GM12878 (cell line): ENCODE measurements at regions of chr2 and their contacts with region 1.

Region 1: GRCh38 chr2:176554101-176555048 is 285.1 kb downstream of the MTX2 start:
- DNase-seq: peak; percentile 8
- ATAC-seq: peak; percentile 79
- H3K4me3 ChIP-seq: peak overlapping the region; percentile 32; the same call in 1 of the 2 replicates
- H3K27ac ChIP-seq: no peak overlapping the region
- H3K4me1 ChIP-seq: no peaks in the 10 kb centered on the region
- H3K27me3 ChIP-seq: 0 out of 4 replicates have a peak, but pooled peaks cover 0 to 3% of the 10 kb centered on the region in 2 experiments
- CTCF ChIP-seq: peak; percentile 58 to 78 (median 70)
- EP300 ChIP-seq: no peak
- POLR2A ChIP-seq: no peak
- RAD21 ChIP-seq: peak; percentile 82

Region 2: DNA sequence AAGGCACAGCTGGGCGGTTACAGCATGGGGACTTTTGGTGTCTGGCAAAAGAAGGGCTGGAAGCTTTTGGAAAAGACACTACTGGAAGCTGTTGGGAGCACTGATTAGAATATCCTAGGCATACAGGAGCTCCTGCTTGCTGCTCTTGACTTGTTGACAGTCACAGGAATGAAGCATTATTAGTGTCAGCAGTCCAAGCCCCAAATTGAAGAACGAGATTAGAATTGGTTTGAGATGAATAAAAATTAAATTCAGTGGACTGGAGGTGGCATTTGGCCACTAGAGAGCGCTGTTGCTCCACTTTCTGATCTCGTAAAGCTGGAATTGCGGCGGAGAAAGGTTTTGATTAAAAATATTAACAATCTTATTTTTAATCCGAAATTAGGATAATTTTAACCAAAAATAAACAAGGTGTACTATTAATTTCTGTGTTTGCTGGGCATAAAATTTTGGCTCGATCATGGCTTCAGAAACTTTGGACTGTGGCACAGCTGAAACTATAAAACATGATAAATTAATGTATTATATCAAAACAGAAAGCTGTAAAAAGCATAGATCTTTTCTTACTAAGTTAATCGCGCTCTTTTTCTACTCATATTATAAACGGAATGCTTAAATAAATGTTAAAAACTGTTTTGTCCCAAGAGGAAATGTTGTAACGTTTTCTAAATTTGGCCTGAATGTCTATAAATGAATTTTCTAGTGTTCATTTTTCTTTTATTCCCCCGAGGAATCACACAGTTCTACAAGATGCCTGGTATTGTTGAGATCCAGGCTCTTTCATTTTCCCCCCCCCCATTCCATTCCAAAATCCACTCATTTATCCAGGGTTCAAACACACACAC is 427.2 kb before region 1 on chr2:
- CTCF ChIA-PET with region 1: interaction called, 36 read pairs
- POLR2A ChIA-PET with region 1: no interaction called
- RAD21 ChIA-PET with region 1: interaction called, 16 read pairs
- SMC1A ChIA-PET with region 1: interaction called, 20 read pairs
- in situ Hi-C with region 1: no loop called
- intact Hi-C with region 1: no loop called
- DNase-seq: no peak
- ATAC-seq: peak; percentile 49; the same call in 2 of the 3 replicates
- H3K4me3 ChIP-seq: no peak overlapping the region
- H3K27ac ChIP-seq: no peak overlapping the region
- H3K4me1 ChIP-seq: no peaks in the 10 kb centered on the region
- H3K27me3 ChIP-seq: peaks cover 7 to 29% of the 10 kb centered on the region in 2 experiments
- CTCF ChIP-seq: peak; percentile 61 to 77 (median 66)
- EP300 ChIP-seq: no peak
- POLR2A ChIP-seq: no peak
- RAD21 ChIP-seq: peak; percentile 81

Region 3: GRCh38 chr2:176140513-176141317 is 413.7 kb before region 1 on chr2:
- CTCF ChIA-PET with region 1: interaction called, 120 read pairs
- POLR2A ChIA-PET with region 1: no interaction called
- RAD21 ChIA-PET with region 1: interaction called, 103 read pairs
- SMC1A ChIA-PET with region 1: interaction called, 58 read pairs
- in situ Hi-C with region 1: loop called (anchors 5 kb)
- intact Hi-C with region 1: loop called (anchors 1 kb)
- DNase-seq: peak; percentile 24
- ATAC-seq: peak; percentile 99
- H3K4me3 ChIP-seq: peak overlapping the region; percentile 37; the same call in 1 of the 2 replicates
- H3K27ac ChIP-seq: no peak overlapping the region
- H3K4me1 ChIP-seq: no peaks in the 10 kb centered on the region
- H3K27me3 ChIP-seq: peaks cover 0 to 11% of the 10 kb centered on the region in 2 experiments
- CTCF ChIP-seq: peak; percentile 75 to 93 (median 92)
- EP300 ChIP-seq: no peak
- POLR2A ChIP-seq: no peak; the same call in 1 of the 2 replicates
- RAD21 ChIP-seq: peak; percentile 95

Region 4: DNA sequence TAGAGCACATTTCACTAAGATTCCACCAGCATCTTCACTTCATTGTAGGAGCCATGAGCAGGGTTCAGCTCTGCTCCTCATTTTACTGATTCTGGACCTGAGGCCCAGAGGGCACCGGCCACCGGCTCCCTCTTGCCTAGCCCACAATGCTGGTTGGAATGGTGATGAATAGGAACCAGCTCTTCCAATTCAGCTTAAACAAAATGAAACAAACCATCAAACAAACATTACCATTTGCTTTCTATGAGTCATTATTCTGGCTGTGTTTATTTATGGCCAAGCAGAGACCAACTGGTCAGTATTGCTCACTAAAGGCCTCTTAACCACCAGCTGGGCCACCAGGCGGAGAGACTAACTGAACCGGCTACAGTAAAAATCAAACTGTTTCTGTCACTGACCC is 108.4 kb before region 1 on chr2:
- CTCF ChIA-PET with region 1: interaction called, 10 read pairs
- POLR2A ChIA-PET with region 1: no interaction called
- RAD21 ChIA-PET with region 1: interaction called, 15 read pairs
- SMC1A ChIA-PET with region 1: interaction called, 13 read pairs
- in situ Hi-C with region 1: no loop called
- intact Hi-C with region 1: no loop called
- DNase-seq: no peak
- ATAC-seq: no peak
- H3K4me3 ChIP-seq: no peak overlapping the region
- H3K27ac ChIP-seq: no peak overlapping the region
- H3K4me1 ChIP-seq: no peaks in the 10 kb centered on the region
- H3K27me3 ChIP-seq: no peaks in the 10 kb centered on the region
- CTCF ChIP-seq: no peak
- EP300 ChIP-seq: no peak
- POLR2A ChIP-seq: no peak
- RAD21 ChIP-seq: no peak

Region 5: GRCh38 chr2:176531608-176532007 is 22.8 kb before region 1 on chr2:
- CTCF ChIA-PET with region 1: interaction called, 16 read pairs
- POLR2A ChIA-PET with region 1: no interaction called
- RAD21 ChIA-PET with region 1: interaction called, 8 read pairs
- SMC1A ChIA-PET with region 1: no interaction called
- in situ Hi-C with region 1: no loop called
- intact Hi-C with region 1: no loop called
- DNase-seq: no peak
- ATAC-seq: no peak
- H3K4me3 ChIP-seq: no peak overlapping the region
- H3K27ac ChIP-seq: no peak overlapping the region
- H3K4me1 ChIP-seq: no peaks in the 10 kb centered on the region
- H3K27me3 ChIP-seq: peaks cover 0 to 4% of the 10 kb centered on the region in 2 experiments; a peak in 2 of 4 replicates
- CTCF ChIP-seq: no peak
- EP300 ChIP-seq: no peak
- POLR2A ChIP-seq: no peak
- RAD21 ChIP-seq: no peak

Region 6: DNA sequence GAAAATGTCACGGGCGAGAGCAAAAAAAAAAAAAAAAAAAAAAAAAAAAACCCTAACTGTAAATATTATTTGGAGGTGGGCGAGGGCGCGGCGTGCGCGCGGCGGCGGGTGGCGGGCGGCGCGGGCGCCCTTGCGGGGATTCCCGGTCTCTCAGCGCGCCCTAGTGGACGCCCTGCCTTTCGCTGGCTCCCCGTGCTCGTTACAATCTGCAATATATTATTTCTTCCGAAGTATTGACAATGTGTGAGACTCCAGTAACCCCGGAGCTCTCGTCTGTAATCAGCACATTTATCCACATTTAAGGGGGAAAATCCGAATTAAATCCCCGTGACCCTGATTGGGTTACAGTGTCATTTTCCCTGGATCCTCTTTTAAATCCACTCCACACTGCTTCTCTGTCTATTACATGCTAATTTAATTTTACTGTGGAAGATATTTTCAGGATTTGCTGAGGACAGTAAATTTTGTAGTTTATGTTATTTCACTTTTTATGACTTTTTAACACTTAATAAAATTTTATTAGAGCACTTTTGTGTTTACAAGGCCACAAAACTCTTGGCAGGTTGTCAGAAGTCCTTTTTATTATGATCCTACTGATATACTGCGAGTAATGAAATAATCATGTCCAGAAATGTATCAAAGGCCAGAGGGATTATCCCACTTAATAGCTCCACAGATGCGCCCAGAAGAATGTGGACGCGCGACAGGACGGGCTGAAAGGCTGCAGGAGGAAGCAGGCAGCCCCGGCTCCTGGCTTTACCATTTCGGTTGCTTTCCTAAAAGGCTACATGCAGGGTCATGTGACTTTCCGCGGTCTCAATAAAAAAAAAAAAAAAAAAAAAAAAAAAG is 84.0 kb after region 1 on chr2:
- CTCF ChIA-PET with region 1: interaction called, 19 read pairs
- POLR2A ChIA-PET with region 1: no interaction called
- RAD21 ChIA-PET with region 1: interaction called, 12 read pairs
- SMC1A ChIA-PET with region 1: interaction called, 10 read pairs
- in situ Hi-C with region 1: no loop called
- intact Hi-C with region 1: no loop called
- DNase-seq: no peak
- ATAC-seq: peak; percentile 93
- H3K4me3 ChIP-seq: peak overlapping the region; percentile 64
- H3K27ac ChIP-seq: no peak overlapping the region
- H3K4me1 ChIP-seq: no peaks in the 10 kb centered on the region
- H3K27me3 ChIP-seq: peaks cover 2 to 8% of the 10 kb centered on the region in 2 experiments
- CTCF ChIP-seq: peak; percentile 68 to 74 (median 70)
- EP300 ChIP-seq: no peak
- POLR2A ChIP-seq: no peak
- RAD21 ChIP-seq: peak; percentile 73

Region 7: DNA sequence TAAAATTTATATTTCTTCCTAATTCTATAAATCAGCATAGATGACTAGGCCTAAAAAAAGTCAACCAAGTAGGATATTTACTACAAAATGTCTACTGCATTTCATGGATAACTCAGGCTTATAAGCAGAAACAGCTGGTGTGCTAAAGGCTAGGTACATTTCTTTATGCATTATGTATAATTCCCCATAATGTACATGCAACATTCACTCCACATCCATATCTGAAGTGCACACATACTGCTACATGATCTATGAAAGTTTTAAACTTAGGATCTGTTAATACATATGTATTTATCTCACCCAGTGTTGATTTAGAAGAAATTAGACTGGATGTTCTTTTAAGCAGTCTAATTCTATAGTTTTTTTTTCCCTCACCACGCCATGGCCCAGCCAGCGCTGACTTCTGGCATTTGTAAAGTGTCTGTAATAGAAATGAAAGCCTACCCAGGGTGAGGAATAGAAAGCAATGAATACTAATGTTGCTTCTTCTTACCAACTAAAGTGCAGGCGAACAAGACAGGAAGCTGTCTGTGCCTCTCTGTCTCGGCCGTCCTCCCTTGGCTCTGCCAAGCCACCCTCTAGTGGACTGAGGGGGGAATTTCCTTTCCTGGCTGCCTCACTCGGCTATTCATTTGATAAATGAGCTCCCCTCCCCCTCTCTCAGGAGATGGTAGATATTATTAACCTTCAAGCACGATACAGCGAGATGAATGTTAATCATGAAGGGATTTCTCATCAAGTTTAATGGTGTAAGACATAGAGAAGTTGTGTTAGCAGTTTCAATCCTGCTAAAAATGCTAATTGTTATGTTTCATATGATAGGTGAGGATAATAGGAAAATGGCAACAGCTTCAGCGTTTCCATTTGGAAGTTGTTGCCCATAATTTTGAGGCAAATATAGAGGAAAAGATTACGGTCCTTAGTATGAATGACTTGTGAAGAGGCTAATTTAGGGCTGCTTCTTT is 99.4 kb after region 1 on chr2:
- CTCF ChIA-PET with region 1: interaction called, 33 read pairs
- POLR2A ChIA-PET with region 1: interaction called, 3 read pairs
- RAD21 ChIA-PET with region 1: interaction called, 24 read pairs
- SMC1A ChIA-PET with region 1: interaction called, 23 read pairs
- in situ Hi-C with region 1: no loop called
- intact Hi-C with region 1: loop called (anchors 5 kb)
- DNase-seq: no peak
- ATAC-seq: peak; percentile 97
- H3K4me3 ChIP-seq: no peak overlapping the region
- H3K27ac ChIP-seq: no peak overlapping the region
- H3K4me1 ChIP-seq: no peaks in the 10 kb centered on the region
- H3K27me3 ChIP-seq: no peaks in the 10 kb centered on the region; a peak in 1 of 4 replicates
- CTCF ChIP-seq: peak; percentile 60 to 76 (median 62)
- EP300 ChIP-seq: no peak
- POLR2A ChIP-seq: no peak
- RAD21 ChIP-seq: peak; percentile 43